Dendritic cell treated with granulocyte-macrophage colony-stimulating factor and Interleukin-4, amounts not matched to agents 40 ng/mL and 50 ng/mL, for 4 days (primary cell): ENCODE measurements at regions of chr9 and their contacts with region 1.

Region 1: GRCh38 chr9:128022886-128023285 is 42.1 kb upstream of the EEIG1 start:
- H3K4me3 Mint-ChIP-seq: no peak overlapping the region
- H3K27ac Mint-ChIP-seq: peak overlapping the region; percentile 30
- H3K4me1 Mint-ChIP-seq: peaks cover 49% of the 10 kb centered on the region
- H3K27me3 Mint-ChIP-seq: peaks cover 13% of the 10 kb centered on the region

Region 2: GRCh38 chr9:128007566-128008138 is 15.2 kb before region 1 on chr9:
- intact Hi-C with region 1: loop called (anchors 2 kb)
- H3K4me3 Mint-ChIP-seq: peak overlapping the region; percentile 4
- H3K27ac Mint-ChIP-seq: peak overlapping the region; percentile 84
- H3K4me1 Mint-ChIP-seq: peaks cover 61% of the 10 kb centered on the region
- H3K27me3 Mint-ChIP-seq: peaks cover 10% of the 10 kb centered on the region